ENCODE measurements at regions of chr7 and their contacts with region 1.

Region 1: DNA sequence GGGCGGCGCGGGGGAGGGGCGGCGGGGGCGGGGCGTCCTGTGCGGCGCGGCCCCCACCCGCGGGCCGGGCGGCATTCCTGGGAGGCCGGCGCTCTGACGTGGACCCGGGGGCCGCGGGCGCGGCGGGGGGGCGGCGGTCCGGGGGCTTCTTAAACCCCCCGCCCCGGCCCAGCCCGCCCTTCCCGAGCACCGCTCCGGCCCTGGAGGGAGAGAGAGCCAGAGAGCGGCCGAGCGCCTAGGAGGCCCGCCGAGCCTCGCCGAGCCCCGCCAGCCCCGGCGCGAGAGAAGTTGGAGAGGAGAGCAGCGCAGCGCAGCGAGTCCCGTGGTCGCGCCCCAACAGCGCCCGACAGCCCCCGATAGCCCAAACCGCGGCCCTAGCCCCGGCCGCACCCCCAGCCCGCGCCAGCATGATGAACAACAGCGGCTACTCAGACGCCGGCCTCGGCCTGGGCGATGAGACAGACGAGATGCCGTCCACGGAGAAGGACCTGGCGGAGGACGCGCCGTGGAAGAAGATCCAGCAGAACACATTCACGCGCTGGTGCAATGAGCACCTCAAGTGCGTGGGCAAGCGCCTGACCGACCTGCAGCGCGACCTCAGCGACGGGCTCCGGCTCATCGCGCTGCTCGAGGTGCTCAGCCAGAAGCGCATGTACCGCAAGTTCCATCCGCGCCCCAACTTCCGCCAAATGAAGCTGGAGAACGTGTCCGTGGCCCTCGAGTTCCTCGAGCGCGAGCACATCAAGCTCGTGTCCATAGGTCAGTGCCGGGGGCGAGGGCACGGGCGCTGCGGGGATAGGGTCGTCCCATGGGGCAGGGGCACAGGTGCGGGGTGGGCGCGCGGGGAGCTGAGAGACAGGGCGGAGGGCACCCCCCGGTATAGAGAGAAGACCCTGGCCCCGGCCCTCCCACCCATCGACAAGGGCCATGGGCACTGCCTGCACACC is at the start of gene FLNC:
- DNase-seq: no peak
- H3K4me3 ChIP-seq: peak within 1 kb of the TSS; percentile 93
- H3K27ac ChIP-seq: peak within 1 kb of the TSS; percentile 87
- H3K27me3 ChIP-seq: no peaks in the 10 kb centered on the region
- CTCF ChIP-seq: no peak
- polyA plus RNA-seq, gene FLNC: 25.8 and 44.7 TPM in 2 replicates

Region 2: GRCh38 chr7:128304212-128304611 is 526.3 kb before region 1 on chr7:
- CTCF ChIA-PET with region 1: no interaction called
- POLR2A ChIA-PET with region 1: no interaction called
- DNase-seq: no peak
- H3K4me3 ChIP-seq: no peak overlapping the region
- H3K27ac ChIP-seq: no peak overlapping the region
- H3K27me3 ChIP-seq: no peaks in the 10 kb centered on the region
- CTCF ChIP-seq: no peak

Region 3: DNA sequence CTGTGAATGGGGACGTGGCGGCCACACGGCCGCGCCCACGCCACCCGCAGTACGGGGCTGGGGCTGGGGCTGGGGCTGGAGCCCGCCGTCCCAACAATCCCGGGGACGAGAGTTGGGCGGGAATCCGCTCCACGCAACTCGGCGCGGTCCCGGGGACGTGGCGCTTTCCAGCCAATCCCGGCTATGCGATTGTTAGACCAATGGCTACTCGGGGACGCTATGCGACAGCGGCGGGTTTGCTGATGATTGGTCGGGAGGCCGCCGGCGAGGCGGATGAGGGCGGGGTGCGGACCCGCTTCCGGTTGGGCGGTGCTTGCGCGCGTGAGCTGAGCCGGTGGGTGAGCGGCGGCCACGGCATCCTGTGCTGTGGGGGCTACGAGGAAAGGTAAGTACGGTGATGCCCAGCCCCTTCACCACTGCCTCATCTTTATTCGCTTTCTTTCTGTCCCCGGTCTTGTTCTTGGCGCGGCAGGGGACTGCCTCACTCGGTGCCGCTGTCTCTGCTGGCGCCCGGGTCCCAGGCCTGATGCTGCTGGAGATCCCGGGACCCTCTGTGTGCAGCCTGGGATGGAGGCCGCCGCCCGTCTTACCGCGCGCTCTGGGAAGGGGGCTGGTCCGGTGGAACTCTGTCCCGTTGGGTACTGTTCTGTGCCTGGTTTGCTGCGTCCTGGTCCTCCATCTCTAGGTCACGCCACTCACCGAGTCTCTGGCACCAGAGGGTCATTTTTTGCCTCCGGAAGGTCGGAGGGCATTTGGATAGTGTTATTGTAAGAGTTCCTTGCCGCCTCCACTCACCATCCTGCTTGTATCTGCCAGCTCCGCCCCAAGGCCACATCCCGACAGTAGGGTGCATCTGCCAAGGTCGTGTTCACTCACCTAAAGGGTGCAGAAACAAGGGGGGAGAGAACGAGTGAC is 91.2 kb before region 1 on chr7 and contains the start of gene CALU:
- CTCF ChIA-PET with region 1: no interaction called
- POLR2A ChIA-PET with region 1: interaction called, 17 read pairs
- DNase-seq: peak; percentile 94
- H3K4me3 ChIP-seq: peak within 1 kb of the TSS; percentile 97
- H3K27ac ChIP-seq: peak within 1 kb of the TSS; percentile 98
- H3K27me3 ChIP-seq: no peaks in the 10 kb centered on the region
- CTCF ChIP-seq: no peak
- polyA plus RNA-seq, gene CALU: 593 and 815 TPM in 2 replicates

Region 4: DNA sequence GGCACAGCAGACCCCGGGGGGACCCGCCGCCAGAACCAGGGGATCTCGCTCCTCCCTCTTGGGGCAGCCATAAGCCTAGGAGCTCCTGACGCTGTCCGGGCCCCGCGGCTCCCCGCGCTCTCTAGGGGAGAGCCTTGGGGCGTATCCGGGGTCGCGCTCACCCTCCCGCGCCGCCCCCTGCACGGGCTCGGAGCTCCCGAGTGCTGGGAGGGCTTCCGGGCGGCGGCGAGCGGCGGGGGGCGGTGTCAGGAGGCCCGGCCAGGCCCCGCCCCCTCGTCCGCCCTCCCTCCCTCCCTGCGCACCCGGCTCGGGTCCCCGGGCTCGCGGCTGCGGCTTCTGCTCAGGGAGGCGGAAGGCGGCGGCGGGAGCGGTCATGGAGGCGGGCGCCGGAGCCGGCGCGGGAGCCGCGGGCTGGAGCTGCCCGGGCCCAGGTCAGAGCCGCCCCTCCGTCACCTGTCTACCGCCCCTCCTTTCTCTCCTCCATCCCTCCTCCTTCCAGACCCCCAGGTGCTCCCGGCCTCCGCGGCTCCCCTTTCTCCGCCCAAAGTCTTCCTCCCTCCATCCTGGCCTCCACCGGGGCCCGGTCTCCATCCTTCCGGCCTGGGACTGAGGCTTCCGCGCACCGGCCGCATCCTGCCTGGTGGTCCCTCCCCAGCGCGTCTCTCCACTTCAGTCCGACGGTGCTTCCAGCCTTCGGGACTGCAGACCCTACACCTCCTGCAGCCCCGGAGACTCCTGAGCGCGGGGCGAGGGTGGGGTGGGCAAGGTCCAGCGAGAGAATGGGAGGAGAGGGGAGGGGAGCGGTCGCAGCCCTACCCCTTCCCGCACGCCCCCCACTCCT is 39.2 kb before region 1 on chr7:
- CTCF ChIA-PET with region 1: no interaction called
- POLR2A ChIA-PET with region 1: interaction called, 16 read pairs
- DNase-seq: no peak
- H3K4me3 ChIP-seq: peak overlapping the region; percentile 80
- H3K27ac ChIP-seq: no peak overlapping the region
- H3K27me3 ChIP-seq: peaks cover 18% of the 10 kb centered on the region
- CTCF ChIP-seq: no peak

Region 5: GRCh38 chr7:128841921-128842651 is 11.6 kb after region 1 on chr7:
- CTCF ChIA-PET with region 1: interaction called, 14 read pairs
- POLR2A ChIA-PET with region 1: interaction called, 5 read pairs
- DNase-seq: no peak
- H3K4me3 ChIP-seq: no peak overlapping the region
- H3K27ac ChIP-seq: no peak overlapping the region
- H3K27me3 ChIP-seq: no peaks in the 10 kb centered on the region
- CTCF ChIP-seq: peak; percentile 66

Measured in AG04450 (cell line).